Gastrocnemius medialis (tissue), 4 donors: ENCODE measurements at regions of chr5 and their contacts with region 1.

Region 1: GRCh38 chr5:160342403-160342941 is 28.0 kb downstream of the C1QTNF2 start:
- DNase-seq: no peak
- ATAC-seq: peak; percentile 23 to 43
- H3K4me3 ChIP-seq: no peak overlapping the region
- H3K27ac ChIP-seq: no peak overlapping the region
- H3K4me1 ChIP-seq: no peaks in the 10 kb centered on the region
- H3K27me3 ChIP-seq: no peaks in the 10 kb centered on the region
- CTCF ChIP-seq: no peak
- POLR2A ChIP-seq: no peak

Region 2: GRCh38 chr5:160021831-160022446 is 320.5 kb before region 1 on chr5:
- in situ Hi-C with region 1: loop called (anchors 5 to 10 kb)
- intact Hi-C with region 1: loop called (anchors 1 kb)
- DNase-seq: no peak
- ATAC-seq: peak; percentile 89 to 91
- H3K4me3 ChIP-seq: no peak overlapping the region
- H3K27ac ChIP-seq: no peak overlapping the region
- H3K4me1 ChIP-seq: peaks cover 6 to 13% of the 10 kb centered on the region in 2 donors
- H3K27me3 ChIP-seq: no peaks in the 10 kb centered on the region
- CTCF ChIP-seq: peak; percentile 61 to 85 (median 77)
- POLR2A ChIP-seq: no peak

Region 3: GRCh38 chr5:160199410-160199911 is 143.0 kb before region 1 on chr5:
- in situ Hi-C with region 1: loop called in 3 of 4 experiments (anchors 5 kb)
- intact Hi-C with region 1: loop called (anchors 1 kb)
- DNase-seq: peak; percentile 21 to 30
- ATAC-seq: peak; percentile 83 to 84
- H3K4me3 ChIP-seq: peak overlapping the region; percentile 39 to 61 (median 55)
- H3K27ac ChIP-seq: no peak overlapping the region
- H3K4me1 ChIP-seq: peaks cover 0 to 4% of the 10 kb centered on the region in 2 donors
- H3K27me3 ChIP-seq: no peaks in the 10 kb centered on the region
- CTCF ChIP-seq: peak; percentile 72 to 94 (median 88)
- POLR2A ChIP-seq: no peak

Region 4: GRCh38 chr5:160269017-160269416 is 73.5 kb before region 1 on chr5:
- in situ Hi-C with region 1: no loop called
- intact Hi-C with region 1: no loop called
- DNase-seq: peak; percentile 52 to 67
- ATAC-seq: peak; percentile 72 to 74
- H3K4me3 ChIP-seq: no peak overlapping the region
- H3K27ac ChIP-seq: peak overlapping the region in 3 of 4 donors; percentile 7 to 45 (median 9)
- H3K4me1 ChIP-seq: peaks cover 0 to 3% of the 10 kb centered on the region in 2 donors
- H3K27me3 ChIP-seq: no peaks in the 10 kb centered on the region
- CTCF ChIP-seq: no peak
- POLR2A ChIP-seq: no peak